Right ventricle myocardium inferior (tissue), 1 donor: ENCODE measurements at regions of chr3 and their contacts with region 1.

Region 1: GRCh38 chr3:168467115-168467714 is 371.5 kb upstream of the GOLIM4 start:
- DNase-seq: no peak
- ATAC-seq: peak; percentile 60

Region 2: DNA sequence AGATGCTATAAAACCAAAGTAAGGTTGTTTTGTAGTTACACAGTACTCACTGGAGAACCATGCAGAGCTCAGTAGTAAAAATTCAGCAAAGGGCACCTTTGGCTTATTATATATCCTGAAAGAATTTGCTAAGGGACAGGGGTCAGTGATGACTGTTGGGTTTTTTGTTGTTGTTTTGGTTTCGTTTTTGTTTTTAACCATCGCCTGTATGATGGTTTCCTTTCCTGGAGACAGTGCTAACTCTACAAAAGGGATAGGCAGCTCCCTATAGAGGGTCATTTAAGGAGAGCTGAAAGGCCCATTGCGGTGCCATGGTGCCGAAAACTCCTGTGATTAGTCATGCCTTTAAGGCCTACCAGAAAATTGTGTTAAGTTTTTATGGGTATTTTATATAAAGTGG is 253.3 kb before region 1 on chr3:
- intact Hi-C with region 1: loop called (anchors 1 kb)
- DNase-seq: no peak
- ATAC-seq: no peak